ENCODE measurements at regions of chr2 and their contacts with region 1.

Region 1: DNA sequence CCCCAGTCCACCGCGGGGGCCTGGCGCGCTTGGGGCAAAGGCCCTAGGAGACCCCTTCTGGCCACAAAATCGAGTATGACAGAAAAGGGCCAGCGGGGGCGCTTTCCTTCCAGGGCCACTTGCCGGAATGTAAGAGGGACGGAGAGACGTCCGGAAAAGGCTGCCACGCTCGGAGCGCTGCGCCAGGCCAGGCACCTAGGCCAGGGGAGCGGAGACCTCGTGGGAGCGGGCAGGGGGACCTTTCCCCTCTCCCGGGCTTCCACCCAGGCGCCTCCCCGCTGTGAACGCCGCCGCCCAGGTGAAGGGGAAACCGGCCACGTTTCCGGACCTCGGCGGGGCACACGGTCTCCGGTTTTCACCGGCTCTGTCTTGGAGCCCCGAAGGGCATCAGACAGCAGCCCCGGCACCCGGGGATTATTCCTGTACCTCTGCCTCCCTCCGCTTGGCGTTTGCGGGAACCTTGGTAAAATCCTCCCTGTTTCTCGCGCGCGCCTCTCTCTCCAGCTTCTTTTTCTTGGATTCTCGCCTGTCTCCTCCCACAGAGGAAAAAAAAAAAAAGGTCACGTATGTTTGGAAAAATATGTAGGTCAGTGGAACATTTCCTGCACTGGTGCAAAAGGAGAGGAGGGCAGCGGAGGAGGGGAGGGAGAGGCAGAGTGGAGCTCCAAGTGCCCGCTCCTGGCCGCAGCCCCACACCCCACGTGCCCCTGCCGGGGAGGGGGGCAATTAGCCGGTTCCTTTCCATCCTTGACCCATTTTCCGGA is 1.2 kb upstream of the NPAS2 start:
- DNase-seq: peak; percentile 62 to 72
- ATAC-seq: peak; percentile 65 to 79
- H3K4me3 ChIP-seq: peak overlapping the region; percentile 96
- H3K27ac ChIP-seq: peak overlapping the region; percentile 97 to 98
- H3K4me1 ChIP-seq: peaks cover 34% of the 10 kb centered on the region
- CTCF ChIP-seq: peak; percentile 57
- EP300 ChIP-seq: no peak
- POLR2A ChIP-seq: 0 out of 2 replicates have a peak, but pooled peaks have one; percentile 2
- RAD21 ChIP-seq: peak; percentile 51 to 57; a peak in 4 of 5 replicates

Region 2: DNA sequence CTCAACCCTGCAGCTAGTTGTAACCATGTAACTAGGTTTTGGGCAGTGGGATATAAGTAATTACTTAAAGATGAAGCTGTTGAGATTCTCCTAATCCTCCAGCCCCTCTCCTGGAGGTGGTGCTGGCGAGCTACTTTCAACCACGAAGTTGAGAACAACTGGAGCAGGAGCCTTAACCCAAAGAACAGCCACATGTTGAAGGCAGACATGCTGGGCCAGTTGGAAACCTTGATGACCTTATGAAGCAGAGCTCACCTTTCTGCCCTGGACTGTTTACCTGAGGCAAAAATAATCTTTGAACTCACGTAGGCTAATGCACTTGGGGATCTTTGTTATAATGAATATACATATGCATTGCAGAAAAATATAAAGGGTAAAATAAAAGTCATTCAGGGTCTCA is 88.4 kb before region 1 on chr2:
- CTCF ChIA-PET with region 1: interaction called, 12 read pairs
- POLR2A ChIA-PET with region 1: interaction called, 7 read pairs
- DNase-seq: peak; percentile 38 to 82
- ATAC-seq: peak; percentile 51 to 87; a peak in 3 of 6 replicates
- H3K4me3 ChIP-seq: no peak overlapping the region
- H3K27ac ChIP-seq: peak overlapping the region; percentile 23 to 85; a peak in 4 of 6 replicates
- H3K4me1 ChIP-seq: peaks cover 34% of the 10 kb centered on the region
- CTCF ChIP-seq: peak; percentile 69
- EP300 ChIP-seq: no peak
- POLR2A ChIP-seq: no peak
- RAD21 ChIP-seq: peak; percentile 90 to 95

Region 3: DNA sequence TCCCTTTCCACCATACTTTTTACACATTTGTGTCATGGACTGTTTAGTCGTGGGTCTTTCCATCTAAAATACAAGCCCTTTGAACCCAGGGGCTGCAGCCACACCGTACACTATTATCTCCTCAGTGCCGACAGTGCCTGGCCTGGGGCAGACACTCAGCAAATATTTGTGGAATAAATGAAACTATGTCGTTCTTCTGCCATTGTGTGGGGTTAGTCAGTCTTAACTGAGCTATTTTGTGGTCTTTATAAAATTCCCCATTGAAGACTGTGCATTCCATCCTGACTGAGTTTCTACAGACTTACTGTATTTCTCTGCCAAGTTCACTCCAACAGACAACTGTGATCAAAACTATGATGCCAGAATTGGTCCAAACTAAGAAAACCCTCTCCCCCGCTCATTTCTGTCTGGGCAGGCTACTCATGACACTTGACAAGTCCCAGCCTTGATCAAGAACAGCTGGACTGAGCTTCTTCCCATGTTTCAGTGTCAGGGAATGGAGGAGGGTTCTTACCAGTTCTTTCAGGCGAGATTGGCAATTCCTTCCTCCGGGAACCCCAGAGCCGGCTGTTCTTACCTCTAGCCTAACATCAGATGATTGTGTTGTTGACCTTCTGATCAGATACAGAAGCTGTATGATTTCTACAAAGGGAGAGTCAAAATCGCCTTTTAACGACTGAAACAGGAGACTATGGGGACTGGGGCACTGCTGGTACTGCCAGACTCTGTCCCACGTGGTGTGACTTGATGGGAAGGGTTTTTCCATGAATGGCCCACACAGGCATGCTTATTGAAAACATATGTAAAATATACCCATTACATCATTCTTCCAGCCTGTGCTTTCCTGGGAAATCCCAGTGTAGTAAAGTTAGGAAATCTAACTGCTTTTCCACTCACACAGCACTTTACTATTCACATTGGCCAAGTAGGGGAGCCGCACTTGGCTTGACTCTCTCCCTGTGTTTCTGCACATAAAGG is 76.2 kb before region 1 on chr2:
- CTCF ChIA-PET with region 1: interaction called, 3 read pairs
- POLR2A ChIA-PET with region 1: interaction called, 10 read pairs
- DNase-seq: peak in 1 of 2 experiments; percentile 53
- ATAC-seq: peak; percentile 74 to 91
- H3K4me3 ChIP-seq: no peak overlapping the region
- H3K27ac ChIP-seq: peak overlapping the region; percentile 44 to 85
- H3K4me1 ChIP-seq: peaks cover 23% of the 10 kb centered on the region
- CTCF ChIP-seq: no peak
- EP300 ChIP-seq: peak in 1 of 2 experiments; percentile 56; a peak in 1 of 5 replicates
- POLR2A ChIP-seq: no peak
- RAD21 ChIP-seq: no peak; a peak in 1 of 5 replicates

Region 4: DNA sequence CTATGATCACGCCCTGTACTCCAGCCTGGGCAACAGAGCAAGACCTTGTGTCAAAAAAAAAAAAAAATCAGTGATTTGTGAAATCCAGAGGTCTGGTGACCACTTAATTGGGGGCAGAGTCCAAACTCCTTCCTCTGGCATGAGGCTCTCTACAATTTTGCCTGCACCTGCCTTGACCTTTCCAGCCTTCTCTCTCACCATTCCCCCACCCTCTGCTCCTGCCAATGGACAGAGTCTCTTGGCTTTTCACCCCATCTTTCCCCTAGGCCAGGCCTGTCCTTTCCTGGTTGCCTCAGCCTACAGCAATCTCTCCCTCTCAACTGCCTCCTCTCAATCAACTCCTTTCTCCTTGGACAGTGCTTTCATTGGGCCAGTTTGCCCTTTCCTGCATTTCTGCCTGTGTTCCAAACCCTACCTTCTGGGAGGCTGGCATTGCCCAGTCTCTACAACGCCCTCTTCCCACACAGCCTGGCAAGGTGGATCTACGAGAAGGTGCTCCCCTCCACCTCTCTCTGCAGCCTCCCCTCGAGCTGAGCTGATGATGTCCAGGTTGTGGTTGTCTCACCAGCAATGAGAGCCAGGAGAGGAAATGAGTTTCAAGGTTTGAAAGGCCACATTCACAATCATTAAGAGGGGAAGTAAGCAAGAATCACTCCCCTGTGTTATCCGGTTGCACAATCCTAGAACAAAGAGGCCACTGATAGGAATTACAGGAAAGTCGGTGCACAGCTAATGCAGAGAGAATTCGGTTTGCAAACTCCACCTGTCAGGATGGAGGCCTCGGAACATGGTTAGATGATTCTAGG is 38.4 kb before region 1 on chr2:
- CTCF ChIA-PET with region 1: no interaction called
- POLR2A ChIA-PET with region 1: no interaction called
- DNase-seq: peak in 1 of 2 experiments; percentile 25
- ATAC-seq: peak; percentile 33 to 36; a peak in 3 of 6 replicates
- H3K4me3 ChIP-seq: no peak overlapping the region
- H3K27ac ChIP-seq: peak overlapping the region; percentile 41 to 65; a peak in 5 of 6 replicates
- H3K4me1 ChIP-seq: peaks cover 28% of the 10 kb centered on the region
- CTCF ChIP-seq: no peak
- EP300 ChIP-seq: no peak
- POLR2A ChIP-seq: no peak
- RAD21 ChIP-seq: no peak

Region 5: DNA sequence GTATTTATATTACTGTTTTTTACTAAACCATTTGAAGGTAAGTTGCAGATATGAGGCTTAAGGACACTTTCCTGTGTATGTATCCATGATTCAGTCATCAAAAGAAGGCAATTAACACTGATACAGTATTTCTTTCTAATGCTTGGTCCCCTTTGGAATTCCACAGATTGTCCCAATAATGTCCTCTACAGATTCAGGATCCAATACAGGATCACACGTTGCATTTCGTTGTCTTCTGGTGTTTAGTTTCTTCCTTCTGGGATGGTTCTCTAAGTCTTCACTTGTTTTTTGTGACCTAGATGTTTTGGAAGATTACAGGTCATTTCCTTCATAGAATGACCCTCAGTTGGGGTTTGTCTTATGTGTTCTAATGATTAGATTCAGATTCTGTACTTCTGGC is 41.1 kb after region 1 on chr2:
- CTCF ChIA-PET with region 1: no interaction called
- POLR2A ChIA-PET with region 1: no interaction called
- DNase-seq: no peak
- ATAC-seq: no peak
- H3K4me3 ChIP-seq: no peak overlapping the region
- H3K27ac ChIP-seq: peak overlapping the region in 1 of 2 experiments; percentile 78; a peak in 2 of 6 replicates
- H3K4me1 ChIP-seq: peaks cover 85% of the 10 kb centered on the region
- CTCF ChIP-seq: no peak
- EP300 ChIP-seq: no peak
- POLR2A ChIP-seq: no peak
- RAD21 ChIP-seq: no peak

Region 6: GRCh38 chr2:100902833-100903405 is 84.1 kb after region 1 on chr2:
- CTCF ChIA-PET with region 1: interaction called, 10 read pairs
- POLR2A ChIA-PET with region 1: interaction called, 16 read pairs
- DNase-seq: peak; percentile 94
- ATAC-seq: peak; percentile 95 to 97
- H3K4me3 ChIP-seq: no peak overlapping the region
- H3K27ac ChIP-seq: peak overlapping the region; percentile 97
- H3K4me1 ChIP-seq: peaks cover 66% of the 10 kb centered on the region
- CTCF ChIP-seq: no peak
- EP300 ChIP-seq: peak; percentile 89; a peak in 3 of 5 replicates
- POLR2A ChIP-seq: no peak
- RAD21 ChIP-seq: peak; percentile 29 to 60; a peak in 4 of 5 replicates

Region 7: GRCh38 chr2:101036562-101037457 is 218.0 kb after region 1 on chr2:
- CTCF ChIA-PET with region 1: no interaction called
- POLR2A ChIA-PET with region 1: no interaction called
- DNase-seq: no peak
- ATAC-seq: 0 out of 6 replicates have a peak, but pooled peaks of 1 of the 2 experiments have one; percentile 13
- H3K4me3 ChIP-seq: no peak overlapping the region
- H3K27ac ChIP-seq: peak overlapping the region; percentile 58 to 80
- H3K4me1 ChIP-seq: peaks cover 27% of the 10 kb centered on the region; the same call in 2 of the 3 replicates
- CTCF ChIP-seq: peak; percentile 59
- EP300 ChIP-seq: no peak
- POLR2A ChIP-seq: no peak
- RAD21 ChIP-seq: peak; percentile 75 to 80

Measured in A549 (cell line).